HepG2 (cell line): ENCODE measurements at regions of chr11 and their contacts with region 1.

Region 1: DNA sequence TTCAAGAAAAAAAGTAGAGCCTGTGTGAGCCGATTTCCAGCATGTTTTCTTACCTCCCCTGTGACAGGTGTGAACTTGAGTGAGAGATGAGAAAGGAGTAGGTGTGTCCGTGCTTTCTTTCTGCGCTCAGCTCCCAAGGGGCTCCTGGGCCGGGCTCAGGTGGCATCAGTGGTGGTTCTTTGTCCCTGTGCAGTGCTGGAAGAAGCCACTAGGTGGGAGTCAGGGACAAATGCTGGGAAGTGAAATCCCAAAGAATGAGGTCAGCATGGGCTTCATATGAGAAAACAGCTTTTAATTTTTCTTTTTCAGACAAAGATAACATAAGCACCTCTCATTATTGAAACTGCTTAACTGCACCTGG is 57.8 kb downstream of the PPFIBP2 start:
- DNase-seq: peak; percentile 76
- ATAC-seq: peak; percentile 42
- H3K4me3 ChIP-seq: peak overlapping the region in 2 of 3 experiments; percentile 5 to 56; a peak in 2 of 6 replicates
- H3K27ac ChIP-seq: peak overlapping the region; percentile 89
- H3K4me1 ChIP-seq: peaks cover 59% of the 10 kb centered on the region
- H3K27me3 ChIP-seq: no peaks in the 10 kb centered on the region
- CTCF ChIP-seq: peak; percentile 91
- EP300 ChIP-seq: no peak
- POLR2A ChIP-seq: no peak
- RAD21 ChIP-seq: peak; percentile 86

Region 2: GRCh38 chr11:7098235-7098832 is 473.3 kb before region 1 on chr11:
- CTCF ChIA-PET with region 1: no interaction called
- POLR2A ChIA-PET with region 1: no interaction called
- in situ Hi-C with region 1: no loop called
- intact Hi-C with region 1: loop called (anchors 1 kb)
- DNase-seq: peak; percentile 49
- ATAC-seq: peak; percentile 81
- H3K4me3 ChIP-seq: no peak overlapping the region
- H3K27ac ChIP-seq: no peak overlapping the region
- H3K4me1 ChIP-seq: no peaks in the 10 kb centered on the region
- H3K27me3 ChIP-seq: no peaks in the 10 kb centered on the region
- CTCF ChIP-seq: peak; percentile 82
- EP300 ChIP-seq: no peak
- POLR2A ChIP-seq: no peak
- RAD21 ChIP-seq: peak; percentile 65; the same call in 1 of the 2 replicates

Region 3: DNA sequence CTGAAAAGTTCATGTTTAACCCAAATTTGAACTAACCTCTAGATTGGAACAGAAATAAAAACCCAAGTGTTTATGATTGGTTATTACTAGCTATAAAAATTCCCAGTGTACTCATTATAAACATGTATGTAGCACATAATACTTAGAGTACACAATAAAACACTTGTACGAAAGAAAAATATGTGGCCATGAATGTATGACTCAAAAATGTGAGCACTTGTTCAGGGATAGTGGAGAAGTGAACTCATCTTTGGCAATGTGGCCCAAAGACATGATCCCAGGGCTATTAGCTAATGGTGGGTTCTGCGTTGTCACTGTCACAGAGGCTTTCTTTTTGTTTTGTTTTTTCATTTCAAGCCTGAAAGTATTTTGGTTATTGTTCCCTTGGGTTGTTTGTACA is 14.2 kb after region 1 on chr11:
- CTCF ChIA-PET with region 1: no interaction called
- POLR2A ChIA-PET with region 1: interaction called, 20 read pairs
- in situ Hi-C with region 1: no loop called
- intact Hi-C with region 1: no loop called
- DNase-seq: no peak
- ATAC-seq: no peak
- H3K4me3 ChIP-seq: no peak overlapping the region
- H3K27ac ChIP-seq: no peak overlapping the region
- H3K4me1 ChIP-seq: peaks cover 37% of the 10 kb centered on the region
- H3K27me3 ChIP-seq: no peaks in the 10 kb centered on the region
- CTCF ChIP-seq: no peak
- EP300 ChIP-seq: no peak
- POLR2A ChIP-seq: no peak
- RAD21 ChIP-seq: no peak

Region 4: GRCh38 chr11:7612661-7613393 is 41.2 kb after region 1 on chr11:
- CTCF ChIA-PET with region 1: no interaction called
- POLR2A ChIA-PET with region 1: interaction called, 45 read pairs
- in situ Hi-C with region 1: loop called (anchors 5 kb)
- intact Hi-C with region 1: loop called (anchors 2 kb)
- DNase-seq: peak; percentile 88
- ATAC-seq: peak; percentile 91
- H3K4me3 ChIP-seq: no peak overlapping the region
- H3K27ac ChIP-seq: peak overlapping the region; percentile 52
- H3K4me1 ChIP-seq: peaks cover 38% of the 10 kb centered on the region
- H3K27me3 ChIP-seq: no peaks in the 10 kb centered on the region
- CTCF ChIP-seq: no peak
- EP300 ChIP-seq: 0 out of 4 replicates have a peak, but pooled peaks of 1 of the 2 experiments have one; percentile 14
- POLR2A ChIP-seq: no peak
- RAD21 ChIP-seq: no peak

Region 5: DNA sequence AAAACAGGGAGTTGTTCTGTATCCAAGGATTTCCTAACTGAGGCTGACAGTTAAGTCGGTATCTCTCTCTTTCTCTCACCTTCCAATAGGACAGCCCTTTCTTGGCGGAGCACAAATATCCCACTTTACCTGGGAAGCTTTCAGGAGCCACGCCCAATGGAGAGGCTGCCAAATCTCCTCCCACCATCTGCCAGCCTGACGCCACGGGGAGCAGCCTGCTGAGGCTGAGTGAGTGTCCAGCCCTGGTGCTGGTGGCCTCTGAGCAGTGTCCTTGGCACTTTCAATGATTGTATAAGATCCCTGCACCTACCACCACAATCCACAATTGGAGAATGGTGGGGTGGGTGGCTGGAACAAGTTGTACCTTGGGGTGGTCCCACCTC is 68.0 kb after region 1 on chr11:
- CTCF ChIA-PET with region 1: no interaction called
- POLR2A ChIA-PET with region 1: no interaction called
- in situ Hi-C with region 1: no loop called
- intact Hi-C with region 1: no loop called
- DNase-seq: no peak
- ATAC-seq: no peak
- H3K4me3 ChIP-seq: no peak overlapping the region
- H3K27ac ChIP-seq: no peak overlapping the region
- H3K4me1 ChIP-seq: no peaks in the 10 kb centered on the region
- H3K27me3 ChIP-seq: no peaks in the 10 kb centered on the region
- CTCF ChIP-seq: no peak
- EP300 ChIP-seq: no peak
- POLR2A ChIP-seq: no peak
- RAD21 ChIP-seq: no peak

Region 6: DNA sequence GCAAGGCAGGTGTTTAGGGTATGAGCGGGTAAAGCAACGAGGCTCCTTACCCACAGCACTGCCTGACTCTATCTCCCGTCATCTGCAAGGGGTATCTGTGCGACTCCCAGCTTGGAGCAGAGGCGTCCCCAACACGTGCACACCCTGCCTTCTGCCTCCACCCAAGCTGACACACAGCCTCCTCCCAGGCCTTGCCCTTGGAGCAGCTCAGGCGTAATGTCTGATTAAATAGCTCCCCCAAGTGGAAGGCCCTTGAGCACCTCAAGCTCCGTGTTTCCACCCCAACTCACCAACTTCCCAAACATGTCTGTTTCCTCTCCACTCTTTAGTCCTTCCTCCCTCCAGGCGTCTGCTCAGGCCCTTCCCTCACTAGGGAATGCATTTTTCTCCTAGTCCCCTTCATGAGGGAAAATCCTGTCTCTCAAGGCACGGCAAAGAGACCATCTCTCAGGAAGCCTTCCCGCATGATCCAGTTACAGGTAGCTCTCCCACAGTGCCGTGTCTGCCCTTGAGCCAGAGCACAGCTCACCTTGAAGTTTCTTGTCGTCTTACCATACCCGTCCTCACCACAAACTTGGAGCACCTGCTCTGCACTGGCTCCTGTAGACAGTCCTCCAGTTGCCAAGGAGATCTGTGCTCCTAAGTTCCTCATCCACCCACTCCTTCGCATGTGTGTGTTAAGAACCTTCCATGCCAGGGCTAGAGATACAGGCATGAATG is 85.8 kb after region 1 on chr11:
- CTCF ChIA-PET with region 1: interaction called, 31 read pairs
- POLR2A ChIA-PET with region 1: interaction called, 11 read pairs
- in situ Hi-C with region 1: loop called (anchors 5 kb)
- intact Hi-C with region 1: loop called (anchors 2 kb)
- DNase-seq: peak; percentile 67
- ATAC-seq: peak; percentile 86
- H3K4me3 ChIP-seq: no peak overlapping the region
- H3K27ac ChIP-seq: no peak overlapping the region
- H3K4me1 ChIP-seq: peaks cover 36% of the 10 kb centered on the region
- H3K27me3 ChIP-seq: no peaks in the 10 kb centered on the region
- CTCF ChIP-seq: peak; percentile 89
- EP300 ChIP-seq: no peak
- POLR2A ChIP-seq: no peak
- RAD21 ChIP-seq: peak; percentile 79